HepG2 (cell line): ENCODE measurements at regions of chr5 and their contacts with region 1.

Region 1: DNA sequence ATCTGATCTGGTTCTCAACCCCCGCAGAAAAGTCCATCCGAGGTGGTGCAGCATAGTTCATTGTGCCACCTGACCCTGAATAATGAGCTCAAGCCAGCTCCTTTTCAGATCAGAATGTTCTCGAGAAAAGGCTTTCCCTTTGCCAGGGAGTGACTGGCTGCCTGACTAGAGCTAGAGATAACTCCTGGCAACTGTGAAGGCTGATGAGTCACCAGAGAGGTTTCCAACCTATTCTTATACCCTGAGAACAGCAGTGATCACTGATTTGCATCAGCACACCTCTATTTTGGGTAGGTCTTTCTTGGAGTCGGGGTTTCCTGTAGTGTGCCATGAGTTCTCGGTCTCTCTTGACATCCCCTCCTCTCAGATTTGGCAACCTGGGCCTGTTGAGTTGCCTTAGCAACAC is 127.9 kb downstream of the PIK3R1 start:
- DNase-seq: no peak
- ATAC-seq: no peak
- H3K4me3 ChIP-seq: no peak overlapping the region
- H3K27ac ChIP-seq: no peak overlapping the region
- H3K4me1 ChIP-seq: no peaks in the 10 kb centered on the region
- H3K27me3 ChIP-seq: no peaks in the 10 kb centered on the region
- CTCF ChIP-seq: no peak
- EP300 ChIP-seq: no peak
- POLR2A ChIP-seq: no peak
- RAD21 ChIP-seq: no peak

Region 2: DNA sequence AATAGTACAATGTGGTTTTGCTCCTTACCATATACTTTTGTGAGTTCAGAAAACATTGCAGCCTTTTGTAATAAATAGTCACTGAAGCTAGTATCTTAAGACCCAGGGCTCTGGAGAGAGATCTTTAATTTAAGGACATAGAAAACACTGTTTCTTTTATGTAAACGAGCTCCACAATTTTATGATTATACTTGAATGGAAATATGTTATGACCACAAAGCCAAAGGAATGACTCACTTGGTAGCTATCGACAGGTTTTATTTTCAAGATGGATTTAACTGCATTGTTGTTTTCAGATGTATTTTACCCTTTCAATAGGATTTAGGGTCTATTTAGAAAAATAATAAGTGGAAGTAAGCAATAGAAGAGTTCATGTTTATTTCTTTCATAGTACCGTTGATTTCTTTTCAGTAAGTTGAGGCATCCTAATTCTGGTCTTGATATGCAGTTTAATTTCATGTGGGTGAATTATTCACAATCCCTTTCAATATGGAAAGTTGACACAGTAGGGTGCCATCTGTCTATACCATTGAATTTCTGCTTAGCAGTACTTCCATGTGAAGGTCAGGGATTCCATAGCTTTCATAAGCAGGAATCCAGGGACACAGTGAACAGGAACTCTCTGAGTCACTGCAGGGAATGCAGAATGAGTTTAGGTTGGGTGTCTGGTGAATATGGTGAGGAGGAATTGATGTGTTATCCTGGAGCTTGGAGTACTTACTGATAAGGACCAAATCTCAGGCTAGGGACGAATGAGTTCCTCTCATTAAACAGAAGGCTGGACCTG is 1304.4 kb before region 1 on chr5:
- CTCF ChIA-PET with region 1: no interaction called
- POLR2A ChIA-PET with region 1: no interaction called
- in situ Hi-C with region 1: no loop called
- intact Hi-C with region 1: no loop called
- DNase-seq: peak; percentile 31
- ATAC-seq: no peak
- H3K4me3 ChIP-seq: no peak overlapping the region
- H3K27ac ChIP-seq: no peak overlapping the region
- H3K4me1 ChIP-seq: peaks cover 7% of the 10 kb centered on the region
- H3K27me3 ChIP-seq: no peaks in the 10 kb centered on the region
- CTCF ChIP-seq: no peak
- EP300 ChIP-seq: no peak
- POLR2A ChIP-seq: no peak
- RAD21 ChIP-seq: no peak

Region 3: GRCh38 chr5:68329554-68330255 is 13.7 kb before region 1 on chr5:
- CTCF ChIA-PET with region 1: no interaction called
- POLR2A ChIA-PET with region 1: no interaction called
- in situ Hi-C with region 1: no loop called
- intact Hi-C with region 1: loop called (anchors 1 kb)
- DNase-seq: no peak
- ATAC-seq: no peak
- H3K4me3 ChIP-seq: no peak overlapping the region
- H3K27ac ChIP-seq: no peak overlapping the region
- H3K4me1 ChIP-seq: no peaks in the 10 kb centered on the region
- H3K27me3 ChIP-seq: peaks cover 1 to 4% of the 10 kb centered on the region in 2 experiments; a peak in 2 of 5 replicates
- CTCF ChIP-seq: no peak
- EP300 ChIP-seq: no peak
- POLR2A ChIP-seq: no peak
- RAD21 ChIP-seq: no peak

Region 4: DNA sequence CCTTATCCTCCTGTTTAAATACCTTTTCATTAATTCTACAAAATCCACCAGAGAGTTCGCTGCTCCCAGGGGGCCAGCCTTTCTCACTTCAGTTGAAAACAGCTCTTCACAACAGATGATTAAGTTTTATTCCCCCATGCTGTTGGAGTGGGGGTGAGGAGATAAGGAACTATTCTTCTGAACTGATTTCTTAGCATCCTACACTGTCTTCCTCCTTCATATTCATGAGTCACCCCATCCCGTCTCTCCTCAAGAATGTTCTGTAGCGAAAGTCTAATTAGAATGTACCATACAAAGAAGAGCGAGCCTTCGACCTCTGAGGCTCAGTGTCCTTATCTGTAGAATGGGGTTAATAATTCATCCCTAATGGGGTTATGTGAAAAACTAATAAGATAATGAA is 10.2 kb after region 1 on chr5:
- CTCF ChIA-PET with region 1: no interaction called
- POLR2A ChIA-PET with region 1: no interaction called
- in situ Hi-C with region 1: no loop called
- intact Hi-C with region 1: no loop called
- DNase-seq: no peak
- ATAC-seq: no peak
- H3K4me3 ChIP-seq: no peak overlapping the region
- H3K27ac ChIP-seq: no peak overlapping the region
- H3K4me1 ChIP-seq: no peaks in the 10 kb centered on the region
- H3K27me3 ChIP-seq: no peaks in the 10 kb centered on the region; a peak in 2 of 5 replicates
- CTCF ChIP-seq: no peak
- EP300 ChIP-seq: no peak
- POLR2A ChIP-seq: no peak
- RAD21 ChIP-seq: no peak

Region 5: GRCh38 chr5:68365889-68366288 is 22.5 kb after region 1 on chr5:
- CTCF ChIA-PET with region 1: no interaction called
- POLR2A ChIA-PET with region 1: no interaction called
- in situ Hi-C with region 1: no loop called
- intact Hi-C with region 1: no loop called
- DNase-seq: no peak
- ATAC-seq: no peak
- H3K4me3 ChIP-seq: no peak overlapping the region
- H3K27ac ChIP-seq: no peak overlapping the region
- H3K4me1 ChIP-seq: no peaks in the 10 kb centered on the region
- H3K27me3 ChIP-seq: peaks cover 0 to 7% of the 10 kb centered on the region in 2 experiments; a peak in 2 of 5 replicates
- CTCF ChIP-seq: no peak
- EP300 ChIP-seq: no peak
- POLR2A ChIP-seq: no peak
- RAD21 ChIP-seq: no peak